GM12878 (cell line): ENCODE measurements at regions of chr4 and their contacts with region 1.

Region 1: DNA sequence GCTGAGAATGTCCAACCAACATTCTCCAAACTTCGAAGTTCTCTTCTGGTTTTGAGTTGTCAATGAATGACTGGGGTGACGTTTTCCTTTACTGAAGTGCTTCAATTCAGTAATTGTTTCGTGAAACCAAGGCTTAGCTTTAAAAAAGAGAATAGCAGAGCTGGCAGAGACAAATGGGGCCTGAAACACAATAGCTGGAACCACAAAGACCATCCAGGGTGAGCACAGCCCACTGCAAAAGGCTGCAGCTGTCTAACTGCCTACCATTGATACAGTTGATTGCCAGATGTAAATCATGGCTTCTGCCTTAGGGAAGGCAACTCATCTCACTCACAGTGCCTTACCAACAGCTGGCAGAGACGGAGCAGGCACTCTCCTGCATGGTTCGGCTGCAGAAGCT is 78.7 kb upstream of the ZNF518B start:
- DNase-seq: peak; percentile 38
- ATAC-seq: peak; percentile 91
- H3K4me3 ChIP-seq: no peak overlapping the region
- H3K27ac ChIP-seq: no peak overlapping the region
- H3K4me1 ChIP-seq: peaks cover 16% of the 10 kb centered on the region
- H3K27me3 ChIP-seq: no peaks in the 10 kb centered on the region
- CTCF ChIP-seq: no peak
- EP300 ChIP-seq: peak in 1 of 2 experiments; percentile 53; a peak in 1 of 4 replicates
- POLR2A ChIP-seq: no peak
- RAD21 ChIP-seq: no peak

Region 2: DNA sequence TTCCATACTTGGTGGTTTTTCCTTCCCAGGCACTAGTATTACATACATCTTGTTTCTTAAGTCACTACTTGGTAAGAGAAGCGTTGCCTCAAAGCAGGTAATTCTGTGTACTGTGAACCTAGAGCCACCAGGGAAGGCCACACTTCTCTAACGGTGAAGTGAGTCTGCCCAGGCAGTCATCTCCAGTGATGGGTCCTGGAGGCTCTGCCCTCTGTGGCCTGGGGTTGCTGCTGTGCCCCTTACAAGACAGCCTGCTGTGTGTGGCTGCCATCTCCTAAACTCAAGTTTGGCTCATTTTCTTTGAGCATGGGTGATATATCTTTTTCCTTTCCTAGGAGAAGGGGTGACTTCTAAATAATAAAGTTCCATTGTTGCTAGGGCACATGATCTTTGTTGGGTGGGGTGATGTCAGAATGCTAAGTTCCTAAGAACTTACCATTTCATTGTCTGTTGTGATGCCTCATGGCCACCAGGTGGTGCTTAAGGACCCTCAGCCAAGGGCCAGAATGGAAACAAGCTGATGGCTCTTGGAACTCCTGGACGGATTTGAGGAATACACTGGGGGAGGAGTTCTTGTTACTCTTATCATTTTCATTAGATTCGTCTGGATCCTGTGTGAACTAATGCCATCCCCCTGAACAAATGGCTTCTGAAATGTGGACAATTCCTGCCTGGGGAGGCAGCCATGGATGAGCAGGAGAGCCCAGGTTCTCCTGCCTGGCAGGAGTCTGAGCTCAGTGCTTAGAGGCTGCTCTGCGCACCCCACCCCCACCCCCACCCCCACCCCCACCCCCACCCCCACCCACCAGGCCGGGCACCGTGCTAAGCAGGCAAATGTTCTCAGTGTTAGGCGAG is 378.2 kb before region 1 on chr4:
- CTCF ChIA-PET with region 1: interaction called, 47 read pairs
- POLR2A ChIA-PET with region 1: no interaction called
- RAD21 ChIA-PET with region 1: interaction called, 26 read pairs
- SMC1A ChIA-PET with region 1: interaction called, 28 read pairs
- in situ Hi-C with region 1: no loop called
- intact Hi-C with region 1: loop called (anchors 2 kb)
- DNase-seq: peak; percentile 9
- ATAC-seq: peak; percentile 89
- H3K4me3 ChIP-seq: no peak overlapping the region
- H3K27ac ChIP-seq: no peak overlapping the region
- H3K4me1 ChIP-seq: no peaks in the 10 kb centered on the region
- H3K27me3 ChIP-seq: no peaks in the 10 kb centered on the region
- CTCF ChIP-seq: peak; percentile 77 to 83 (median 80)
- EP300 ChIP-seq: no peak
- POLR2A ChIP-seq: no peak
- RAD21 ChIP-seq: peak; percentile 88

Region 3: GRCh38 chr4:10164877-10165283 is 371.0 kb before region 1 on chr4:
- CTCF ChIA-PET with region 1: interaction called, 47 read pairs
- POLR2A ChIA-PET with region 1: no interaction called
- RAD21 ChIA-PET with region 1: interaction called, 26 read pairs
- SMC1A ChIA-PET with region 1: interaction called, 28 read pairs
- in situ Hi-C with region 1: no loop called
- intact Hi-C with region 1: no loop called
- DNase-seq: no peak
- ATAC-seq: no peak
- H3K4me3 ChIP-seq: no peak overlapping the region
- H3K27ac ChIP-seq: no peak overlapping the region
- H3K4me1 ChIP-seq: no peaks in the 10 kb centered on the region
- H3K27me3 ChIP-seq: no peaks in the 10 kb centered on the region
- CTCF ChIP-seq: peak; percentile 60 to 63 (median 61)
- EP300 ChIP-seq: no peak
- POLR2A ChIP-seq: no peak
- RAD21 ChIP-seq: peak; percentile 60

Region 4: GRCh38 chr4:10413177-10413576 is 122.7 kb before region 1 on chr4:
- CTCF ChIA-PET with region 1: interaction called, 4 read pairs
- POLR2A ChIA-PET with region 1: no interaction called
- RAD21 ChIA-PET with region 1: no interaction called
- SMC1A ChIA-PET with region 1: interaction called, 7 read pairs
- in situ Hi-C with region 1: no loop called
- intact Hi-C with region 1: loop called (anchors 5 kb)
- DNase-seq: no peak
- ATAC-seq: peak; percentile 95
- H3K4me3 ChIP-seq: no peak overlapping the region
- H3K27ac ChIP-seq: no peak overlapping the region
- H3K4me1 ChIP-seq: no peaks in the 10 kb centered on the region
- H3K27me3 ChIP-seq: no peaks in the 10 kb centered on the region
- CTCF ChIP-seq: no peak
- EP300 ChIP-seq: peak in 1 of 2 experiments; percentile 53; a peak in 1 of 4 replicates
- POLR2A ChIP-seq: no peak
- RAD21 ChIP-seq: no peak

Region 5: DNA sequence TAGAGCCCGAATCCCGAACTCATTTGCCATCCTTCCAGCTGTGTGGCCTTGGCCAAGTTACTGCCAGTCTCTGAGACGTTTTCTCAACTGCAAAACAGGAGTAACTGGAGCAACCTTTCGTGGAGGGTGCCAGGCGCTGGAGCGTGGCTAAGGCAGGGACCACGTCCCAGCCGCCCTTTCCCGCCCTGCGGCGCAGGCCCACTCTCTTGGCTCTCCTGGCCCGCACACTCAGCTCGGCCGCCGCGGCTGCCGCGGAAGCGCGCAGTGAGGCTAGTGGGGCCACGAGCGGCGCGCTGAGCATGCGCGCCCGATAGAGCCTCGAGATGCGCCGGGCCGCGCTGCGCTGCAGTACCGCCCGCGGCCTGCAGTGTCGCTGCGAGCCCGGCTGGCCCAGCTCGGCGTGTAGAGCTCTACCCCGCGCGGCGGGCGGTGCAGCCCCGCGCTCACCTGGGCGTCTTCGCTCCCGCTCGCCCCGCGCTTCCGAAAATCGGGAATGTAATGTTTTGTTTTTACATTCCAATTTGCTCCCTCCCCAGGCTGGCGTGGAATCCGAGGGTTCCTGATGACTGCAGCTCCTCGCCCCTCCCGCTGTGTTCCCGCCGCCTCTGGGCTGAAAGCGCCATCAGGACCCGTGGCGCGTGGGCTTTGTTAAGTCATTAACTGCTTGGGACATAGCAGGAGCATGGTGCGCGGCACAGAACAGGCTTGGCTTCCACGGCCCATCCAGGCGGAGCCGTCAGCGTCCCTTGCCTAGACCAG is 74.6 kb before region 1 on chr4:
- CTCF ChIA-PET with region 1: interaction called, 22 read pairs
- POLR2A ChIA-PET with region 1: no interaction called
- RAD21 ChIA-PET with region 1: interaction called, 5 read pairs
- SMC1A ChIA-PET with region 1: interaction called, 10 read pairs
- in situ Hi-C with region 1: no loop called
- intact Hi-C with region 1: loop called (anchors 2 kb)
- DNase-seq: peak; percentile 31
- ATAC-seq: peak; percentile 84
- H3K4me3 ChIP-seq: peak overlapping the region; percentile 43; the same call in 1 of the 2 replicates
- H3K27ac ChIP-seq: no peak overlapping the region
- H3K4me1 ChIP-seq: no peaks in the 10 kb centered on the region
- H3K27me3 ChIP-seq: peaks cover 0 to 5% of the 10 kb centered on the region in 2 experiments; a peak in 3 of 4 replicates
- CTCF ChIP-seq: peak; percentile 85 to 90 (median 86)
- EP300 ChIP-seq: no peak
- POLR2A ChIP-seq: peak; percentile 42; the same call in 1 of the 2 replicates
- RAD21 ChIP-seq: peak; percentile 55

Region 6: GRCh38 chr4:10584042-10584441 is 48.1 kb after region 1 on chr4:
- CTCF ChIA-PET with region 1: no interaction called
- POLR2A ChIA-PET with region 1: no interaction called
- RAD21 ChIA-PET with region 1: no interaction called
- SMC1A ChIA-PET with region 1: no interaction called
- in situ Hi-C with region 1: no loop called
- intact Hi-C with region 1: no loop called
- DNase-seq: peak; percentile 49
- ATAC-seq: peak; percentile 80
- H3K4me3 ChIP-seq: peak overlapping the region; percentile 29; the same call in 1 of the 2 replicates
- H3K27ac ChIP-seq: peak overlapping the region; percentile 20; the same call in 1 of the 2 replicates
- H3K4me1 ChIP-seq: peaks cover 7% of the 10 kb centered on the region; the same call in 1 of the 2 replicates
- H3K27me3 ChIP-seq: no peaks in the 10 kb centered on the region
- CTCF ChIP-seq: no peak
- EP300 ChIP-seq: no peak
- POLR2A ChIP-seq: no peak
- RAD21 ChIP-seq: no peak